ENCODE measurements at regions of chr13 and their contacts with region 1.

Region 1: GRCh38 chr13:30114571-30115256 is 192.6 kb downstream of the KATNAL1 start:
- DNase-seq: peak; percentile 78
- H3K27ac ChIP-seq: peak overlapping the region; percentile 62
- CTCF ChIP-seq: peak; percentile 93

Region 2: DNA sequence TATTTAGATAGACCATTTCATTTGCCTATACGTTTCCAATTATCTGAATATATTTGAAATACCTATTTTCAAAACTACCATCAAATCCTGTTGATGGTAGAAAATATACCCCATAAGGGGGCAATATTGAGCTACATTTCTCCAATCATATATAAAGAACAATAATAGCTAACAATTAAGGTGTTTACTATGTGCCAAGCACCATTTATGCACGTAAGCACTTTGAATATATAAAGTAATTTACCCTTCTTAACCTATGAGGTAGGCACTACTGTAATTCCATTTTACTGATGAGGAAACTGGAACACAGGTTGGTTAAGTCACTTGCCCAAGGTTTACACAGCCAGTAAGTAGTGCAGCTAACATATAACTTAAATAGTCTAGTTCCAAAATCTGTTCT is 343.5 kb before region 1 on chr13:
- CTCF ChIA-PET with region 1: interaction called, 16 read pairs
- POLR2A ChIA-PET with region 1: no interaction called
- DNase-seq: no peak
- H3K27ac ChIP-seq: no peak overlapping the region
- CTCF ChIP-seq: peak; percentile 41

Region 3: DNA sequence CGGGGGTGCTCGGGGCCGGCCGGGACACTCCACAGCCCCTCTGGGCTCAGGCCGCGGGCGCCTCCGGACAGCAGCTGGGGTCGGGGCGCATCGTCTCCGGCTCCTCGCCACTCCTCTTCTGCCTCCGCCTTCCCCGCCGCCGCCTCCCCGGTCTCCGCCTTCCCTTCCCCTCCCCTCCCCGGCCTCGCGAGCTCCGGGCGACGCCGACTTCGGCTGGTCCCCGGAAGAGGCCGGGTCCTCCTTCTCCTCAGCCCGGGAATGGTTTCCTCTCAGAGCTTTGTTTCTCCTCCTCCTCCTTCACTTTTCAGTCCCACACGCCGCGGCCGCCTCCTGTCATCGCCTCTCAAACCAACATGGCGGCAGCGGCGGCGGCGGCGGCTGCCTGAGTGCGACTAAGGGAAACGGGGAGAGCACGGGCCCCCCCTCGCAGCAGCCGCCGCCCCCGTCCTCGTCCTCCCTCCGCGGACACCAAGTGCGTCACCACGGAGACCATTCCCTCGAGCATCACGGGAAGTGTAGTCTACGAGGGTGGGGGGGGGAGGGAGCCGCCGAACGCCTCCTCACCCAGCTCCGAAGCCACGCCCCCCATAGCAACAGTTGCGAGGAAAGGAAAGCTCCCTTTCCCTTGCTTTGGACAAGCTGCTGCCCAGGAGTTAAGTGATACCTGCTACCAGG is 264.4 kb before region 1 on chr13 and contains the start of gene UBL3:
- CTCF ChIA-PET with region 1: interaction called, 23 read pairs
- POLR2A ChIA-PET with region 1: no interaction called
- DNase-seq: peak; percentile 97
- H3K27ac ChIP-seq: peak within 1 kb of the TSS; percentile 96
- CTCF ChIP-seq: no peak

Region 4: DNA sequence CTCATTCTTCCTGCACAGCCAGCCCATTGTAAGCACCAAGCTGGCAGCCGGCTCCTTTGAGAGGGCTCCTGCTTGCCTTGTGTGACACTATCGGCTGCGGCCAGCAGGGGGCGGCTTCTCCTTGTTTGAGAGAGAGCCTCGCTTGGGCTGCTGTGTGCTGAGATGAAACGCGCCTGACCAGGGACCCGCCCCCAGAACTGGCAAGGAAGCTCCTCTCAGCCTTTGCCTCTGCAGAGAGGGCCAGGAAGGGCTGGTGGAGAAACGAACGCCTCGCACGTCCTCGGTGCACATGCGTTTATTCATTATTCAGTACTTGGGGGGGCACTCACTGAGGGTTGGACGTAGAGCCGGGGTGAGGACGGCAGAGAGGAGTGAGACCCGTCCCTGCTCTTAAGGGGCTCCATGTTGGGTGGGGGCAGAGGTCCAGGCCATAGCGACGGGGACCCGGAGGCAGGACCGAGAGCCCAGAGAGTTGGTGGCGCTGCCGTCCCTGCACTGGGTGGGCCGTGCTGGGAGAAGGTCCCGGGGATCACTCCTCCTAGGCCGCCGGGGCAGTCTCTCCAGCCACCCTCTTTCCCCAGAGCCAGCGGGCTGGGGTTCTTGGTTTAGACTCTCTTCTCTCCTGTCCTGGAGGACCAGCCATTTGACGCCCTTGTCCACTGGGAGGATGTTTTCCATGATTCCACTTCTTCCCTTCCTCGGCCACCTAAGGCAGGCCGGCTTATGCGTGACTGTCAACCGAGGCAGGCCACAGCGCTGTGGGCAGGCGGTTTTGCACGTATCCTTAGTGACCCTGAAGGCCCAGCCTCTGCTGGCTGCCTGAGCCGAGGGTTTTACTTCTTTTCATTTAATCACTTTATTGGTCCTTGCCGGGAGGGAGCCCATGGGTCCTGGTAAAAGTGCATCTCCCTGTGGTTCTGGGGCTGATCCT is 18.2 kb after region 1 on chr13:
- CTCF ChIA-PET with region 1: interaction called, 26 read pairs
- POLR2A ChIA-PET with region 1: no interaction called
- DNase-seq: peak; percentile 80
- H3K27ac ChIP-seq: no peak overlapping the region
- CTCF ChIP-seq: peak; percentile 90